ENCODE measurements at regions of chr3 and their contacts with region 1.

Region 1: GRCh38 chr3:158644345-158644908 is at the start of gene GFM1:
- DNase-seq: peak; percentile 82 to 97
- ATAC-seq: peak; percentile 98 to 100
- H3K4me3 ChIP-seq: peak within 1 kb of the TSS; percentile 72
- H3K27ac ChIP-seq: peak within 1 kb of the TSS; percentile 87 to 99
- H3K4me1 ChIP-seq: peaks cover 14% of the 10 kb centered on the region
- CTCF ChIP-seq: peak; percentile 94
- EP300 ChIP-seq: no peak
- POLR2A ChIP-seq: peak; percentile 57; the same call in 1 of the 2 replicates
- RAD21 ChIP-seq: peak; percentile 49 to 53
- polyA plus RNA-seq, gene GFM1: 54.5 and 71.4 TPM in 2 replicates

Region 2: DNA sequence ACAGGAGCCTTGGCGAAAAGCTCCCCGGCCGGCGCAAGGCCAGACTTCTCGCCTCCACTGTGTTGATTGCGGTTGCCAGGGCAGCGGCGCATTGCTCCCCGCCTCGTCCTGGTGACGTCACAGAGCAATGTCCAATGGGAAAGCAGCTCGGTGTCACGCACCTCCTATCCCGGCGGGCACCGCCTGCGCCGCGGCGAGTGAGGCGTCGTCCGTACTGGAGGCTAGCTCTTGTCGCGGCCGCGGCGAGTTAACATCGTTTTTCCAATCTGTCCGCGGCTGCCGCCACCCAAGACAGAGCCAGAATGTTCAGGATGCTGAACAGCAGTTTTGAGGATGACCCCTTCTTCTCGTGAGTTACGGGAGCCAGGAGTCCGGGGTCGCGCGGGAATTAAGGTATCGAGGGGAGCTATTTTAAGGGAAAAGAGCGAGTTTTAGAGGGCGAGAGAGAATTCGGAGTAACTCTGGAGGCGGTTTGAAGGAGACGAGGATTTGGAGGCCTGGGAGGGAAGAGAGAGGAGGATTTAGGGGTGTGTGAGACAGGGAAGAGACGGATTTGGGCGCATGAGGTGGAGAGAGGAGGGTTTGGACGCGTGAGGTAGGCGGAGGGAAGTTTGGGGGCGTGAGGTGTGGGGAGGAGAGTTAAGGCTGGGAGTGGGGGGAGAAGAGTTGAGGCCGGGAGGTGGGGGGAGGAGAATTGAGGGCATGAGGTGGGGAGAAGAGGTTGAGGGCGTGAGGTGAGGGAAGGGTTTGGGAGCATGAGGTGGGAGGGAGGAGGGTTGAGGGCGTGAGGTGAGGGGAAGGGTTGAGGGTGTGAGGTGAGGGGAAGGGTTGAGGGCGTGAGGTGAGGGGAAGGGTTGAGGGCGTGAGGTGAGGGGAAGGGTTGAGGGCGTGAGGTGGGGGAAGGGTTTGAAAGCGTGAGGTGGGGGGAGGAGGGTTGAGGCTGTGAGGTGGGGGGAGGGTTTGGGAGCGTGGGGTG is 73.1 kb before region 1 on chr3 and contains the start of gene MLF1:
- CTCF ChIA-PET with region 1: interaction called, 5 read pairs
- POLR2A ChIA-PET with region 1: interaction called, 17 read pairs
- DNase-seq: peak; percentile 95
- ATAC-seq: peak; percentile 99
- H3K4me3 ChIP-seq: peak within 1 kb of the TSS; percentile 75
- H3K27ac ChIP-seq: peak within 1 kb of the TSS; percentile 76 to 81
- H3K4me1 ChIP-seq: 0 out of 3 replicates have a peak, but pooled peaks cover 3% of the 10 kb centered on the region
- CTCF ChIP-seq: no peak
- EP300 ChIP-seq: no peak
- POLR2A ChIP-seq: peak; percentile 55
- RAD21 ChIP-seq: no peak
- polyA plus RNA-seq, gene MLF1: 12.4 and 18.6 TPM in 2 replicates

Region 3: GRCh38 chr3:158617982-158618875 is 26.2 kb before region 1 on chr3:
- CTCF ChIA-PET with region 1: interaction called, 12 read pairs
- POLR2A ChIA-PET with region 1: no interaction called
- DNase-seq: no peak
- ATAC-seq: no peak
- H3K4me3 ChIP-seq: no peak overlapping the region
- H3K27ac ChIP-seq: no peak overlapping the region
- H3K4me1 ChIP-seq: no peaks in the 10 kb centered on the region
- CTCF ChIP-seq: no peak
- EP300 ChIP-seq: no peak
- POLR2A ChIP-seq: no peak
- RAD21 ChIP-seq: no peak

Measured in A549 (cell line).